Mammary epithelial cell (primary cell): ENCODE measurements at regions of chr6 and their contacts with region 1.

Region 1: GRCh38 chr6:18155150-18155863 is at the start of gene KDM1B:
- DNase-seq: peak; percentile 98
- H3K4me3 ChIP-seq: peak within 1 kb of the TSS; percentile 97 to 99 (median 98)
- H3K27ac ChIP-seq: peak within 1 kb of the TSS; percentile 98
- H3K4me1 ChIP-seq: peaks cover 16% of the 10 kb centered on the region
- H3K27me3 ChIP-seq: no peaks in the 10 kb centered on the region
- CTCF ChIP-seq: no peak
- total RNA-seq, gene KDM1B: 19.5 to 25.1 TPM

Region 2: GRCh38 chr6:18122124-18123093 is 32.9 kb before region 1 on chr6 and contains the start of gene NHLRC1:
- CTCF ChIA-PET with region 1: no interaction called
- dilution Hi-C with region 1: no loop called
- in situ Hi-C with region 1: no loop called
- intact Hi-C with region 1: no loop called
- DNase-seq: peak; percentile 84
- H3K4me3 ChIP-seq: peak within 1 kb of the TSS in 2 of 3 experiments; percentile 44 to 54
- H3K27ac ChIP-seq: peak within 1 kb of the TSS; percentile 31
- H3K4me1 ChIP-seq: peaks cover 7% of the 10 kb centered on the region
- H3K27me3 ChIP-seq: no peaks in the 10 kb centered on the region
- CTCF ChIP-seq: peak; percentile 91 to 96
- total RNA-seq, gene NHLRC1: 2.1 to 3.3 TPM

Region 3: DNA sequence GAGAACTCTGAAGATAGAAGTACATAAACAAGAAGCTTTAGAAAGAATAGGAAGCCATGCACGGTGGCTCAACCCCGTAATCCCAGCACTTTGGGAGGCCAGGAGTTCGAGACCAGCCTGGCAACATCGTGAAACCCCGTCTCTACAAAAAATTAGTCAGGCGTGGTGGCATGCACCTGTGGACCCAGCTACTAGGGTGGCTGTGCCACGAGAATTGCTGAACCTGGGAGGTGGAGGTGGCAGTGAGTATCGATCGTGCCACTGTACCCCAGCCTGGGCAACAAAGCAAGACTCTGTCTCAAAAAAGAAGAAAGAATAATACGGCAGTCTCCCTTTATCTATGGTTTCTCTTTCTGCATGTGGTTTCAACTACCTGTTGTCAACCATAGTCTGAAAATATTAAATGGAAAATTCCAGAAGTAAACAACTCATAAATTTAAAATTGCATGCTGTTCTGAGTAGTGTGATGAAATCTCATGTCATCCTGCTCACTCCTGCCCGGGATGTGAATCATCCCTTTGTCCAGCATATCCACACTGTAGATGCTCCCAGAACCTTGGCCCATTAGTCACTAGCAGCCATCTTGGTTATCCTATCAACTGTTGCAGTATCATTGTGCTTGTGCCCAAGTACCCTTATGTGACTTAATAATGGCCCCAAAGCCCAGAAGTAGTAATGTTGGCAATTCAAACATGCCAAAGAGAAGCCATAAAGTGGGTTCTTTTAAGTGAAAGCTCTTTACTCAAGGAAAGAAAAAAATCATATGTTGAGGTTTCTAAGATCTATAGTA is 87.0 kb after region 1 on chr6:
- CTCF ChIA-PET with region 1: no interaction called
- dilution Hi-C with region 1: no loop called
- in situ Hi-C with region 1: no loop called
- intact Hi-C with region 1: loop called (anchors 5 kb)
- DNase-seq: peak; percentile 90
- H3K4me3 ChIP-seq: no peak overlapping the region
- H3K27ac ChIP-seq: peak overlapping the region; percentile 73
- H3K4me1 ChIP-seq: peaks cover 35% of the 10 kb centered on the region
- H3K27me3 ChIP-seq: no peaks in the 10 kb centered on the region
- CTCF ChIP-seq: no peak

Region 4: GRCh38 chr6:18264219-18264922 is 109.1 kb after region 1 on chr6 and contains the start of gene DEK:
- CTCF ChIA-PET with region 1: no interaction called
- dilution Hi-C with region 1: no loop called
- in situ Hi-C with region 1: no loop called
- intact Hi-C with region 1: loop called (anchors 2 kb)
- DNase-seq: peak; percentile 74
- H3K4me3 ChIP-seq: peak within 1 kb of the TSS; percentile 72 to 91 (median 82)
- H3K27ac ChIP-seq: peak within 1 kb of the TSS; percentile 77
- H3K4me1 ChIP-seq: peaks cover 41% of the 10 kb centered on the region
- H3K27me3 ChIP-seq: no peaks in the 10 kb centered on the region
- CTCF ChIP-seq: peak; percentile 19 to 61
- total RNA-seq, gene DEK: 34.5 to 103 TPM

Region 5: GRCh38 chr6:18314317-18314997 is 159.2 kb after region 1 on chr6:
- CTCF ChIA-PET with region 1: no interaction called
- dilution Hi-C with region 1: no loop called
- in situ Hi-C with region 1: no loop called
- intact Hi-C with region 1: no loop called
- DNase-seq: no peak
- H3K4me3 ChIP-seq: no peak overlapping the region
- H3K27ac ChIP-seq: no peak overlapping the region
- H3K4me1 ChIP-seq: no peaks in the 10 kb centered on the region
- H3K27me3 ChIP-seq: no peaks in the 10 kb centered on the region
- CTCF ChIP-seq: no peak